Naive thymus-derived CD4-positive, alpha-beta T cell (primary cell): ENCODE measurements at regions of chr19 and their contacts with region 1.

Region 1: DNA sequence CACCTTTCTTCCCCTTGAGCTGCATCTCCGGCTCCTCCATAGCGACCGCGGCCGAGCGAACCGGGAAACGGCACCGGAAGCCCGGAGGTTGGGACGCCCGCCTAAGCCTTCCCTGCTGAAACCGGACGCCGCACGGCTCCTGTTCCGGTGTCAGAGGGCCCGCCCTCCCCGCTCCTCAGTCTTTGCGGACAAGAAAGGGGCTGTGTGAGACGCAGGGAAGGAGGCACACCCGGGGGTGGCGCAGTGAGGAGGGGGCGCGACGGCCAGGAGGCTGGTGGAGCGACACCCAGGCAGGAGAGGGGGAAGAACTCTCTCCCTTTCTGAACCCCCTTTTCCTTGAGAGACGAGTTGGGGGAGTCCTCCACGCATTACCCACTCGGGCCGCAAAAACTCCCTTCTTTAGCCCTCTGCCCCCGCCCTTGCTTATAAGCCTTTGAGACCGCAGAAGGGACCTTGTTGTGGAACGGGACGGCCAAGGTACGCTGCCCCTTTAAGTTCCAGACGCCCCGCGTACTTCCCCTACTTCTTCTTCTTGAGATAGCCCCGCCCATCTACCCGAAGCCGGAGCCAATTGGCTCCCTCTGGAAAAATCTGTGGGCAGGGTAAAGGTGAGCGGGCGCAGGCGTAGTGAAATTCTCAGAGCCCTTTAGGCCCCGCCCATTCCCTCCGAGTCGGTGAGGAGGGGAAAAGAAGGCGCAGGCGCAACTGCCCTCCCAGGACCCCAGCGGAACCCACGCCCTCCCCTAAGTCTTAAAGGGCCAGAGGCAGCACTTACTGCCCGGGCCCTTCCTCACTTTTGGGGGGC is at the starts of genes BORCS8 and RFXANK:
- DNase-seq: peak; percentile 89 to 99 (median 99)
- ATAC-seq: peak; percentile 95
- H3K4me3 ChIP-seq: peak within 1 kb of the TSS; percentile 100
- H3K4me3 Mint-ChIP-seq: peak within 1 kb of the TSS; percentile 94 to 100 (median 98)
- H3K27ac ChIP-seq: peak within 1 kb of the TSS; percentile 100
- H3K27ac Mint-ChIP-seq: peak within 1 kb of the TSS; percentile 99 to 100 (median 99)
- H3K4me1 ChIP-seq: peaks cover 13 to 22% of the 10 kb centered on the region in 2 donors
- H3K4me1 Mint-ChIP-seq: peaks cover 23 to 68% (median 45%) of the 10 kb centered on the region in 7 donors
- H3K27me3 ChIP-seq: no peaks in the 10 kb centered on the region
- H3K27me3 Mint-ChIP-seq: no peaks in the 10 kb centered on the region
- total RNA-seq, gene BORCS8: 22.6 to 48.2 (median 42.7) TPM
- total RNA-seq, gene RFXANK: 60.8 to 114 (median 74.9) TPM

Region 2: DNA sequence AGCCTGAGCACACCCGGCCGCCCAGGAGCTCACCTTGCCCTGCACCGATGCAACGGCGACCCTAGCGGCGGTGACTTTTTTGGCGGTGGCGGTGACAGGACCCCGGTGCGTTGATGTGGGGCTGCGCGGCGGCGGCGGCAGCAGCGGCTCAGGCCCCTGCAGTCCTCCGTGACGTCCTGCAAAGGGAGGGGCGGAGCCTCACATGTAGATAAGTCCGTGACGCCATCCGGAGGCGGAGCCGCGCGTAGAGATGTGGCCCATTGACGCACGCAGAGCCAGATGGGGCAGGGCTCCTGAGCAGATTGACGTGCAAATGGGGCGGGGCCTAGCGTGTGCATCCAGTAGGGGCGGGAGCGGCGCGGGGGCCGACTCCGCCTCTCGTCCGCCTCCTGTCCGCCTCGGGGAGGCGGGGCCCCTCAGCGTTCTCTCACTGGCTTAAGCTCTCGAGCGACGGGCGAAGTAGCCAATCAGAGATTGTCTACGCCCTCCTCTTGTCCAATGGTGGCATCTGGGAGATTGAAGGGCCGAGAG is 988.4 kb before region 1 on chr19 and contains the start of gene RAB3A:
- CTCF ChIA-PET with region 1: no interaction called
- POLR2A ChIA-PET with region 1: no interaction called
- intact Hi-C with region 1: loop called in 1 of 2 experiments (anchors 1 kb)
- DNase-seq: peak; percentile 95 to 100 (median 99)
- ATAC-seq: peak; percentile 95
- H3K4me3 ChIP-seq: peak within 1 kb of the TSS; percentile 90
- H3K4me3 Mint-ChIP-seq: peak within 1 kb of the TSS; percentile 83 to 98 (median 96)
- H3K27ac ChIP-seq: peak within 1 kb of the TSS; percentile 85
- H3K27ac Mint-ChIP-seq: peak within 1 kb of the TSS; percentile 87 to 99 (median 97)
- H3K4me1 ChIP-seq: peaks cover 15 to 16% of the 10 kb centered on the region in 2 donors
- H3K4me1 Mint-ChIP-seq: peaks cover 11 to 26% (median 22%) of the 10 kb centered on the region in 7 donors
- H3K27me3 ChIP-seq: no peaks in the 10 kb centered on the region
- H3K27me3 Mint-ChIP-seq: peaks cover 0 to 8% (median 0%) of the 10 kb centered on the region in 5 donors
- total RNA-seq, gene RAB3A: 5.7 to 16.7 (median 8.8) TPM

Region 3: GRCh38 chr19:19063183-19064097 is 128.8 kb before region 1 on chr19 and contains the start of gene SLC25A42:
- CTCF ChIA-PET with region 1: no interaction called
- POLR2A ChIA-PET with region 1: no interaction called
- intact Hi-C with region 1: loop called (anchors 1 kb)
- DNase-seq: peak; percentile 93 to 100 (median 99)
- ATAC-seq: peak; percentile 95
- H3K4me3 ChIP-seq: peak within 1 kb of the TSS; percentile 82
- H3K4me3 Mint-ChIP-seq: peak within 1 kb of the TSS; percentile 83 to 99 (median 92)
- H3K27ac ChIP-seq: peak within 1 kb of the TSS; percentile 83
- H3K27ac Mint-ChIP-seq: peak within 1 kb of the TSS; percentile 75 to 98 (median 83)
- H3K4me1 ChIP-seq: peaks cover 11 to 15% of the 10 kb centered on the region in 2 donors
- H3K4me1 Mint-ChIP-seq: peaks cover 5 to 41% (median 35%) of the 10 kb centered on the region in 7 donors
- H3K27me3 ChIP-seq: no peaks in the 10 kb centered on the region
- H3K27me3 Mint-ChIP-seq: no peaks in the 10 kb centered on the region
- total RNA-seq, gene SLC25A42: 19.0 to 36.1 (median 21.6) TPM

Region 4: GRCh38 chr19:19203012-19203856 is 11.0 kb after region 1 on chr19 and contains the start of gene NR2C2AP:
- CTCF ChIA-PET with region 1: no interaction called
- POLR2A ChIA-PET with region 1: interaction called, 58 read pairs
- intact Hi-C with region 1: loop called (anchors 1 kb)
- DNase-seq: peak; percentile 80 to 94 (median 89)
- ATAC-seq: peak; percentile 95
- H3K4me3 ChIP-seq: peak within 1 kb of the TSS; percentile 95
- H3K4me3 Mint-ChIP-seq: peak within 1 kb of the TSS; percentile 90 to 94 (median 92)
- H3K27ac ChIP-seq: peak within 1 kb of the TSS; percentile 89
- H3K27ac Mint-ChIP-seq: peak within 1 kb of the TSS; percentile 88 to 96 (median 93)
- H3K4me1 ChIP-seq: peaks cover 23% of the 10 kb centered on the region in 2 donors
- H3K4me1 Mint-ChIP-seq: peaks cover 22 to 36% (median 30%) of the 10 kb centered on the region in 7 donors
- H3K27me3 ChIP-seq: no peaks in the 10 kb centered on the region
- H3K27me3 Mint-ChIP-seq: peaks cover 0 to 12% (median 0%) of the 10 kb centered on the region in 5 donors
- total RNA-seq, gene NR2C2AP: 13.8 to 33.4 (median 28.7) TPM

Region 5: GRCh38 chr19:19361075-19361594 is 168.9 kb after region 1 on chr19:
- CTCF ChIA-PET with region 1: no interaction called
- POLR2A ChIA-PET with region 1: interaction called, 5 read pairs
- intact Hi-C with region 1: loop called in 1 of 2 experiments (anchors 2 kb)
- DNase-seq: peak; percentile 40 to 70 (median 57)
- ATAC-seq: peak; percentile 79
- H3K4me3 ChIP-seq: no peak overlapping the region
- H3K4me3 Mint-ChIP-seq: peak overlapping the region in 8 of 10 donors; percentile 7 to 73 (median 54)
- H3K27ac ChIP-seq: no peak overlapping the region
- H3K27ac Mint-ChIP-seq: peak overlapping the region in 8 of 9 donors; percentile 5 to 78 (median 68)
- H3K4me1 ChIP-seq: peaks cover 15 to 21% of the 10 kb centered on the region in 2 donors
- H3K4me1 Mint-ChIP-seq: peaks cover 18 to 51% (median 35%) of the 10 kb centered on the region in 7 donors
- H3K27me3 ChIP-seq: no peaks in the 10 kb centered on the region
- H3K27me3 Mint-ChIP-seq: no peaks in the 10 kb centered on the region

Region 6: DNA sequence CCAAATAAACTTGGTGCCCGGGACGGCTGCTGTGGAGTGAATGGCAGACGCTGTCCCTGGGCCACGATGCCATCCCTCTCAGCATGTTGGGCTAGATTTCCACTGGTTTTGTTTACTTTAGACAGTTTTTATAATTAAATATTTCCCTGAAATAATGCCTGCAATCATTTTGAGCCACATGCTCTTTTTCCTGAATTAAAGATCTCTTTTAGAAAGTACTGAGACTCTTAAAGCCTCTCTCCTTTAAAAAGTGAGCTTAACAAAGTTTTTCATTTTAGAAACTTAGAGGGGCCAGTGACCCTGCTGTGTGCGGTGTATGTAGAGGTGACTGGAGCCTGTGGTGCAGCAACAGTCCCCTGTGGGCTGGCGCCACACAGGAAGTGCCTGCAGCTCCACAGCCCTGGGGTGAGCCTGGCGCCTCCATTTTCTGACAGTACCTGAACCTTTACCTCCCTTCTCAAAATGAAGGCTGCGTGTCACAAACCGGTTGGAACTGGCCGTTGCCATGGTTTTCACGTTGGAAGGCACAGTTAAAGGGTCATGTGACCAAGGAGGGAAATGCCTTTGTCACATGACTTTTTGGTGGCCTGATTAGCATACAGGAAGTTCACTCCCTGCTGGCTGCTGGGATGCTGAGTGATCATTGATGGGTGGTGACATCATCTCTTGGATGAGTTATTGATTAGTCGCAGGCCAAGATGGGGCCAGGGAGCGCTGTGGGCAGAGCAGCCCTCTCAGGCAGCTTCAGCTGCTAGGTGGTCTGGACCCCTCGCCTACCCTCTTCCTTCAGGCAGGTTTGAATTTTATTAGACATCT is 296.8 kb after region 1 on chr19:
- CTCF ChIA-PET with region 1: interaction called, 4 read pairs
- POLR2A ChIA-PET with region 1: interaction called, 3 read pairs
- intact Hi-C with region 1: loop called (anchors 1 kb)
- DNase-seq: peak; percentile 63 to 97 (median 94)
- ATAC-seq: peak; percentile 90
- H3K4me3 ChIP-seq: peak overlapping the region; percentile 22
- H3K4me3 Mint-ChIP-seq: peak overlapping the region; percentile 58 to 84 (median 78)
- H3K27ac ChIP-seq: peak overlapping the region; percentile 81
- H3K27ac Mint-ChIP-seq: peak overlapping the region; percentile 96 to 99 (median 99)
- H3K4me1 ChIP-seq: peaks cover 33 to 51% of the 10 kb centered on the region in 2 donors
- H3K4me1 Mint-ChIP-seq: peaks cover 27 to 61% (median 52%) of the 10 kb centered on the region in 7 donors
- H3K27me3 ChIP-seq: no peaks in the 10 kb centered on the region
- H3K27me3 Mint-ChIP-seq: no peaks in the 10 kb centered on the region

Region 7: DNA sequence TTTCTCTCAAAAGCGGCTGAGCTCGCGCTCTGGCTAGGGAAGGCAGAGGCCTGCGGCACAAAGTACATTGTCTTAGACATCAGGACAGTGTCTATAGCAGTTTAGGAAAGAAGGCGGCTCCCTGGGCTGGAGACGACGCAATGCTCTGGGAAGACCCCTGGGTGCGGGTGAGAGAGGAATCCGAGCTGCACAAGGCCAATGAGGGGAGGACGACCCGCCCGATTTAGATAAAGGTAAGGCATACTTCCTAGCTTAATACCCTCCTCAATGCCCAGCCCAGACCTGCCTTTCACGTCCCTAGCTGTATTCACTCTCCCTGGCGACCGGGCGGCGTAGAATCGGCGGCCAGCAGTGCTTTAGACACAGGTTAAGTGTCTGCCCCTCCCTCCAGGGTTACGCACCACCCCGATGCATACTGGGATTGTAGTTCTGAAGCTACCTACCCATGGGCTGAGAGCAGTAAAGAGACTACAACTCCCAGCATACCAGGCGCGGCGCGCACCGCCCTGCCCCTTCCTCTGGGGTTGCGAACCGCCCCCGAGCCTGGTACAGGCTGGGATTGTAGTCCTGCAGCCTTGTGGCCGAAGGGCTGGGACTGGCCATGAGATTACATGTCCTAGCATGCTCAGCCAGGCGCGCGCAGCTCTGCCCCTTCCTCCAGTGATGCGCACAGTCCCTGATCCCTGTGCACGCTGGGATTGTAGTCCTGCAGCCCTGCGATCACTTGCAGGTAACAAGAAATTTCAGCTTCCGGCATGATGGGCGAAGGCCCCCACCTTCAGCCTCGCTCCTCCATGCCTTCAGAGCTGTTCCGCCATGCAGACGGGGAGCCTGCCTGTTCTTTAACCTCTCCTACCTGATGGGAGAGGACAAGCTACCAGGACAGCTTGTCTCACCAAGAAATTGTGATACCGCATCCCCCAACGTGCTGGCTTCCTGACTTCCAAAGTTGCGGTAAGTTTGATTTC is 584.0 kb after region 1 on chr19:
- CTCF ChIA-PET with region 1: no interaction called
- POLR2A ChIA-PET with region 1: no interaction called
- intact Hi-C with region 1: loop called in 1 of 2 experiments (anchors 5 kb)
- DNase-seq: peak; percentile 79 to 95 (median 91)
- ATAC-seq: peak; percentile 100
- H3K4me3 ChIP-seq: peak overlapping the region; percentile 91
- H3K4me3 Mint-ChIP-seq: peak overlapping the region; percentile 91 to 100 (median 98)
- H3K27ac ChIP-seq: peak overlapping the region; percentile 84
- H3K27ac Mint-ChIP-seq: peak overlapping the region; percentile 88 to 99 (median 97)
- H3K4me1 ChIP-seq: peaks cover 11 to 20% of the 10 kb centered on the region in 2 donors
- H3K4me1 Mint-ChIP-seq: peaks cover 25 to 67% (median 54%) of the 10 kb centered on the region in 7 donors
- H3K27me3 ChIP-seq: no peaks in the 10 kb centered on the region
- H3K27me3 Mint-ChIP-seq: no peaks in the 10 kb centered on the region